GM10248 (cell line): ENCODE measurements at regions of chr12 and their contacts with region 1.

Region 1: DNA sequence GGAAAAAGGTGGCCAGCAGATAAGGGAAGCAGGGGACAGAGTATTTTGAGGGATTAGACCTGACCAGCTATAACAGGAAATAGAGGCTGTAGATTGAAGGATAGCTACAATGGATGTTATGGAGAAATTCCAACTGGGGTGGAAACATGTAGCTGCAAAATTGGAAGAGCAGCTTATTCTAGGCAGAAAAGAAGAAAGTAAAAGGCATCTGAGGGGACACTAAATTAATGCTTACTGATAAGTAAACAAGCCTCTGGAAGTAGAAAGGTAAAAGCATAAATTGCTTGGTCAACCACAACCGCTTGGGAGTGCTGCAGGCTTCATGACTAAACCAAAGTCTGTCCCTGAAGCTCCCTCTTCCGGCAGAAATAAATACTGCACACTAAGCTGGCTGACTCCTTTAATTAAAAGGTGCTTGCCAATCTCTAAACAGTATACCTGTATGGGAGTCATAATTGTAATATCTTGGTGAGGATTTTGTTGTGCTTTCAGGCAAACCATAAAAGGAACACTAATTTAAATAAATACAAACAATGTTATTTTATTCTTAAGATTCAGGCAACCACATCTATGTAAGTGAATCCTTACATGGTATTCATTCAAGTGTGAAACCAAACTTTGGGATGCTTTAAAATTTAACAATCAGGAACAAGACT is 7.7 kb downstream of the UBC start:
- DNase-seq: peak; percentile 81
- CTCF ChIP-seq: peak; percentile 99

Region 2: DNA sequence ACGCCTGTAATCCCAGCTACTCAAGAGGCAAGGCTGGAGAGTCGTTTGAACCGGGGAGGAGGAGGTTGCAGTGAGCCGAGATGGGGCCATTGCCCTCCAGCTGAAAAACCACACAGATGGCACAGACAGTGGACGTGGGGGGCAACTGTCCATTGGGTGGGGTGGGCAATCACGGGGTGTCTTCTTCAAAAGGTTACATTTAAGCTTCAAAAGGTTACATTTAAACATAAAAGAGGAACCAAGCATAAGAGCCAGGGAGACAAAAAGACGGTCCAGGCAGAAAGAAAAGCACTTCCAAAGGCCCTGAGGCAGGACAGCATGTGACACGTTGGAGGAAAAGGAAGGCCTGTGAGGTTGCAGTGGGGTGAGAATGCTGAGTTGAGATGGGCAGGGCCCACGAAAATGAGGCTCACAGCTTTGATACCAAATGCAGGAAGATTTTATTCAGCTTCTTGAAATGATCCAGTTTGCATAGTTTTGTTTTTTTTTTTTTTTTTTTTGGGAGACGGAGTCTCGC is 53.8 kb before region 1 on chr12:
- CTCF ChIA-PET with region 1: interaction called, 11 read pairs
- POLR2A ChIA-PET with region 1: no interaction called
- DNase-seq: no peak
- CTCF ChIP-seq: no peak

Region 3: GRCh38 chr12:124881123-124881522 is 25.6 kb before region 1 on chr12:
- CTCF ChIA-PET with region 1: interaction called, 41 read pairs
- POLR2A ChIA-PET with region 1: interaction called, 4 read pairs
- DNase-seq: no peak
- CTCF ChIP-seq: no peak

Region 4: GRCh38 chr12:124893792-124894516 is 12.8 kb before region 1 on chr12:
- CTCF ChIA-PET with region 1: interaction called, 41 read pairs
- POLR2A ChIA-PET with region 1: interaction called, 4 read pairs
- DNase-seq: no peak
- CTCF ChIP-seq: no peak

Region 5: GRCh38 chr12:124940549-124941527 is 34.1 kb after region 1 on chr12:
- CTCF ChIA-PET with region 1: interaction called, 69 read pairs
- POLR2A ChIA-PET with region 1: interaction called, 24 read pairs
- DNase-seq: peak; percentile 79
- CTCF ChIP-seq: peak; percentile 90

Region 6: DNA sequence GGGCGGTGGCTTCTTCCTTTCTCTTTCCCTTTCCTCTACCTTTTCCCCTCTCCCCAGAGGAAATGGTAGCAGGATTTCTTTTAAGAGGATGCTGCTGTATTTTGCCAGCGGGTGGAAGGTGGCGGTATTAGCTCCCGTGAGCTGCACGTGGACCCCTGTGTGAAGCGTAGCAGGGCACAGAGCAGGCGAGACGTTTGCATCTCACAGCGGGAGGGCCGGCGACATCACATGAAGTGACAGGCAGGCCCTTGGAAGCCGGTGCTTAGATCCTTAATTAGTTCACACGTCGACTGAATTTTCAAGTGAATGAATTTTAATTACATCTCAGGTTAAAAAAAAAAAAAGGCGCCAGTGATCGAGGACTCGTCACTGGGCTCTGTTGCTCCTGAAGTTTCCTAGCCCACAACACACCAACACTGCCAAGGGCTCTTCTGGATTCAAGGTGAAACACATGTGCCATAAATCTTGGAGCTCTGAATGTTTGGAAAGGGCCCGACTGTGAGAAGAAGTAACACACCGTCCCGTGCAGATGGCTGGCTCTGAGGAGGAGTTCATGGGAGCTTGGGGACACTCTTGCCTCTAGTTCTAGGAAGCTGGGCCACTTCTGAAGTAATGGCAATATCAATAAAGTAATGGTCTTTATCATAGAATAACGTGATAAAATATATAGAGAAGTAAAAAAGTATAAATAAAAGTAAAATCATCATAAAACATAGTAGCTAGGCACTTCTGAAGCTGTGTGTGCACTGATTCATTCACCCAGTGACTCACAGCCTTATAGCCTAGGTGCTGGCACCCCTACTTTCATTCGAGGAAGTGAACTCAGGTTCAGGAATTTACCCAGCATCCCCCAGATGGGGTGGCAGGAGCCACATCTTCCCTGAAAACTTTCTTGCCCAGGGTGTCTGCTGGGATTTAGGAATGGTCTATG is 233.8 kb after region 1 on chr12:
- CTCF ChIA-PET with region 1: no interaction called
- POLR2A ChIA-PET with region 1: no interaction called
- DNase-seq: no peak
- CTCF ChIP-seq: no peak